ENCODE measurements at regions of chr2 and their contacts with region 1.

Region 1: DNA sequence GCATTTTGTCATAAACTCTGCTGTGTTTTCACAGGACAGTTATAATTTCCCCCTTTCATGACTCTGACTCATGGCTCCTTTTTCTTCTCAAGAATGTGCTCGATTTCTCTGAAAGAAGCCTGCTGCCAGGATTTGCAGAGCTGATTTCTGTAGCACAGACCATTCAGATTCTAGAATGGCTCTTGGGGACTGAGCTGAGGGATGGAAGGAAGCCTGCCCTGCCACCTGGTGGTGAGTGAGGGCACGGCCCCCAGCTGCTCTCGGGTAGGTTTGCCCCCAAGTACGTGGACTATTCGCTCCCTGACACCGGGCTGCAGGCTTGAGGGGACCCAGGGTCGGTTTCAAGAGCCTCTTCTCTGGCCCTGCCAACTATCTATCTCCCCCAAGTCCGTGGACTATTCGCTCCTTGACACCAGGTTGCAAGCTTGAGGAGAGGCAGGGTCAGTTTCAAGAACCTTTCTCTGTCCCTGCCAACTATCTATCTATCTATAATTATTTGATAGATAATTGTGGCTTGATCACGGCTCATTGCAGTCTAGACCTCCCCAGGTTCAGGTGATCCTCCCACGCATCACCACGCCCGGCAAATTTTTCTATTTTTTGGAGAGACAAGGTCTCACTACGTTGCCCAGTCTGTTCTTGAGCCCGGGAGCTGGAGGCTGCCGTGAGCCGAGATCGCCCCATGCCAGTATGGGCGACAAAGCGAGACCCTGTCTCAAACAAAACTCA is 1.4 kb upstream of the SMYD5 start:
- DNase-seq: peak; percentile 78
- ATAC-seq: peak; percentile 76
- H3K4me3 ChIP-seq: peak overlapping the region; percentile 50 to 93 (median 86)
- H3K27ac ChIP-seq: peak overlapping the region; percentile 92
- H3K4me1 ChIP-seq: peaks cover 72% of the 10 kb centered on the region
- H3K27me3 ChIP-seq: no peaks in the 10 kb centered on the region
- CTCF ChIP-seq: peak; percentile 98
- EP300 ChIP-seq: no peak
- POLR2A ChIP-seq: peak in 1 of 2 experiments; percentile 36; a peak in 1 of 4 replicates
- RAD21 ChIP-seq: peak; percentile 89

Region 2: DNA sequence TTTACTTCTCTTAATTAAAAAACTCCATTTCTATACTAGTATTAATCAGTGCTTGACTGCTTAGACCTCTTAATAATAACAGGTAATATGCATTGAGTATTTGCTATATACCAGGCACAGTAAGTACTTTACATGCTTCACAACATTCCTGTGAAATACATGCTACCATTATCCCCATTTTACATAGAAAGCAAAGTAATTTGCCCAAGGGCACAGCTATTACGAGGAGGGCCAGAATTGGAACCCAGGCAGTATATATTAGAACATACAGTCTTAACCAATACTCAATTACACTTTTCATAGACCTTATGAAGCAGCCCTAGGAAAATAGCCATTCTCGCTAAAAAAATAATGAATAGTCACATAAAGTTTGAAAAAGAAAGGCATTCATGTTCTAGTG is 723.2 kb before region 1 on chr2:
- CTCF ChIA-PET with region 1: no interaction called
- POLR2A ChIA-PET with region 1: no interaction called
- in situ Hi-C with region 1: no loop called
- intact Hi-C with region 1: no loop called
- DNase-seq: no peak
- ATAC-seq: no peak
- H3K4me3 ChIP-seq: no peak overlapping the region
- H3K27ac ChIP-seq: no peak overlapping the region
- H3K4me1 ChIP-seq: no peaks in the 10 kb centered on the region
- H3K27me3 ChIP-seq: no peaks in the 10 kb centered on the region
- CTCF ChIP-seq: no peak
- EP300 ChIP-seq: no peak
- POLR2A ChIP-seq: no peak
- RAD21 ChIP-seq: no peak

Region 3: GRCh38 chr2:73071360-73072133 is 141.1 kb before region 1 on chr2 and contains the start of gene SFXN5:
- CTCF ChIA-PET with region 1: no interaction called
- POLR2A ChIA-PET with region 1: interaction called, 14 read pairs
- in situ Hi-C with region 1: no loop called
- intact Hi-C with region 1: no loop called
- DNase-seq: peak; percentile 95
- ATAC-seq: peak; percentile 89
- H3K4me3 ChIP-seq: peak within 1 kb of the TSS; percentile 81 to 98 (median 95)
- H3K27ac ChIP-seq: peak within 1 kb of the TSS; percentile 89
- H3K4me1 ChIP-seq: peaks cover 53% of the 10 kb centered on the region
- H3K27me3 ChIP-seq: no peaks in the 10 kb centered on the region; a peak in 1 of 5 replicates
- CTCF ChIP-seq: peak; percentile 33; the same call in 1 of the 2 replicates
- EP300 ChIP-seq: 0 out of 4 replicates have a peak, but pooled peaks of 1 of the 2 experiments have one; percentile 6
- POLR2A ChIP-seq: peak; percentile 82 to 90
- RAD21 ChIP-seq: peak; percentile 34; the same call in 1 of the 2 replicates
- total RNA-seq, gene SFXN5: 22.2 and 34.9 TPM in 2 replicates

Region 4: GRCh38 chr2:73091164-73091563 is 121.4 kb before region 1 on chr2:
- CTCF ChIA-PET with region 1: interaction called, 11 read pairs
- POLR2A ChIA-PET with region 1: no interaction called
- in situ Hi-C with region 1: no loop called
- intact Hi-C with region 1: loop called (anchors 1 kb)
- DNase-seq: peak; percentile 84
- ATAC-seq: peak; percentile 68
- H3K4me3 ChIP-seq: no peak overlapping the region
- H3K27ac ChIP-seq: no peak overlapping the region
- H3K4me1 ChIP-seq: peaks cover 51% of the 10 kb centered on the region
- H3K27me3 ChIP-seq: no peaks in the 10 kb centered on the region
- CTCF ChIP-seq: 0 out of 2 replicates have a peak, but pooled peaks have one; percentile 7
- EP300 ChIP-seq: peak; percentile 35 to 40; a peak in 1 of 4 replicates
- POLR2A ChIP-seq: no peak
- RAD21 ChIP-seq: no peak; the same call in 1 of the 2 replicates

Region 5: GRCh38 chr2:73176881-73177644 is 35.5 kb before region 1 on chr2:
- CTCF ChIA-PET with region 1: interaction called, 74 read pairs
- POLR2A ChIA-PET with region 1: interaction called, 43 read pairs
- in situ Hi-C with region 1: loop called (anchors 5 kb)
- intact Hi-C with region 1: loop called (anchors 1 kb)
- DNase-seq: peak; percentile 78
- ATAC-seq: peak; percentile 81
- H3K4me3 ChIP-seq: peak overlapping the region; percentile 57 to 77 (median 59)
- H3K27ac ChIP-seq: no peak overlapping the region
- H3K4me1 ChIP-seq: peaks cover 48% of the 10 kb centered on the region
- H3K27me3 ChIP-seq: peaks cover 7 to 61% of the 10 kb centered on the region in 2 experiments; a peak in 4 of 5 replicates
- CTCF ChIP-seq: peak; percentile 100
- EP300 ChIP-seq: peak in 1 of 2 experiments; percentile 11; a peak in 1 of 4 replicates
- POLR2A ChIP-seq: no peak
- RAD21 ChIP-seq: peak; percentile 99

Region 6: GRCh38 chr2:73202156-73203054 is 10.2 kb before region 1 on chr2 and contains the start of gene NOTO:
- CTCF ChIA-PET with region 1: no interaction called
- POLR2A ChIA-PET with region 1: interaction called, 93 read pairs
- in situ Hi-C with region 1: no loop called
- intact Hi-C with region 1: no loop called
- DNase-seq: no peak
- ATAC-seq: no peak; the same call in 2 of the 3 replicates
- H3K4me3 ChIP-seq: no peak within 1 kb of the TSS
- H3K27ac ChIP-seq: no peak within 1 kb of the TSS
- H3K4me1 ChIP-seq: peaks cover 40% of the 10 kb centered on the region
- H3K27me3 ChIP-seq: peaks cover 0 to 8% of the 10 kb centered on the region in 2 experiments; a peak in 1 of 5 replicates
- CTCF ChIP-seq: no peak
- EP300 ChIP-seq: no peak
- POLR2A ChIP-seq: no peak
- RAD21 ChIP-seq: no peak
- total RNA-seq, gene NOTO: not detected in 2 replicates

Region 7: GRCh38 chr2:73260034-73260984 is 47.7 kb after region 1 on chr2:
- CTCF ChIA-PET with region 1: no interaction called
- POLR2A ChIA-PET with region 1: interaction called, 12 read pairs
- in situ Hi-C with region 1: no loop called
- intact Hi-C with region 1: loop called (anchors 1 kb)
- DNase-seq: peak; percentile 72
- ATAC-seq: peak; percentile 65
- H3K4me3 ChIP-seq: no peak overlapping the region
- H3K27ac ChIP-seq: no peak overlapping the region
- H3K4me1 ChIP-seq: peaks cover 51% of the 10 kb centered on the region
- H3K27me3 ChIP-seq: no peaks in the 10 kb centered on the region
- CTCF ChIP-seq: peak; percentile 96
- EP300 ChIP-seq: no peak
- POLR2A ChIP-seq: no peak
- RAD21 ChIP-seq: peak; percentile 89